ENCODE measurements at regions of chr11 and their contacts with region 1.

Region 1: DNA sequence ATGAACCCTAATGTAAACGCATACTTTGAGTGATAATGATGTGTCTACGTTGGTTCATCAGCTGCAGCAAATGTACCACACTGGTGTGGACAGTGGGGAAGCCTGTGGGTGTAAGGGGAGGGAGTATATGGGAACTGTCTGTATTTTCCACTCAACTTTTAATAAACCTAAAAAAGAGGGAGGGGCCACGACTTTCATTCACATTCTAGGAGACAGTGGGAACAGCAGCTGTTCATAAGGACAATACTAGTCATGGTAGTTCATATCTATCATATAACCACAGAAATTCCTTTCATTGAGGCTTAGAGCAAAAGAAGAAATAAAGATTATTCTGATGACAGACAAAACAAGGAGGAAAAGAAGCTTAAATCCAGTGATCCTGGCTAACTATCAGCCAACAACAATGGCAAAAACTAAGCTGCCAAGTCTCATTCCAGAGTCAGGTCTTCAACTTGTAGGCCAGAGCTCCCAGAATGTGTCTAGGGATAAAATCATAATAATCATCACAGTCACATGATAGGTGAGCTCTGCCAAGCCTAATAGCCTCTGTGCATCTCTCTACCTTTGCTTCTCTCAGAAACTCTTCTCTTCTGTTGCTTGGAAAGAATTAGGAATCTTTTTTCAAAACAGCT is 59.4 kb upstream of the CHRM4 start:
- DNase-seq: no peak
- ATAC-seq: no peak

Region 2: DNA sequence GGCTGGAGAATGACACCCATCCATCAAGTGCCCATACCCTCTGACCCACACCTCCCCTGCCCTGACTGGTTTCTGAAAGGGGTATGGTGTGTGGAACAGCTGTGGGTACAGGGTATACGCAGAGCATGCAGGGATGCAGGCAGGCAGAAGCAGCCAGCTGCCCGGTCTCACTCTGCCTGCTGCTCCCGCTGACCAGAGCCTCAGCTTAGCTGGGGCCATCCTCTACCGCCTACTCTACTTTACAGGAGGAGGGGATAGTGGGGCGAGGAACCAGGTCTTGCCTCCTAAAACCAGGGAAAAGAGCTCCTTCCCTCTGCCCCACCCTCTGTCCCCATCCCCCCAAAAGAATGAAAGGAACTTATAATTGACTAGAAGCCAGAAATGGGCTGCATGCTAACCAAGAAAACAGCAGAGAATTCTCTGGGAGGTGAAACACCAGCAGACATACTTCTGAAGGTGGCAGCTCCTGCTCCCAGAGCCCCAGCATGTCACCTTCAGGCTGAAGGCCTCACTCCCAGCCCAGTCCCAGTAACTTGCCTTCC is 46.4 kb before region 1 on chr11:
- intact Hi-C with region 1: loop called (anchors 10 kb)
- DNase-seq: no peak
- ATAC-seq: no peak

Region 3: GRCh38 chr11:46529095-46529905 is 78.3 kb after region 1 on chr11:
- intact Hi-C with region 1: no loop called
- DNase-seq: peak; percentile 75
- ATAC-seq: peak; percentile 69

Measured in Right ventricle myocardium inferior (tissue), 1 donor.